Calu3 (cell line): ENCODE measurements at regions of chr7 and their contacts with region 1.

Region 1: GRCh38 chr7:98434095-98434494 is 33.2 kb upstream of the BAIAP2L1 start:
- DNase-seq: no peak
- H3K4me3 Mint-ChIP-seq: no peak overlapping the region
- H3K27ac Mint-ChIP-seq: no peak overlapping the region
- H3K4me1 Mint-ChIP-seq: peaks cover 6% of the 10 kb centered on the region
- H3K27me3 Mint-ChIP-seq: peaks cover 26% of the 10 kb centered on the region
- CTCF ChIP-seq: no peak

Region 2: GRCh38 chr7:98357751-98358161 is 76.3 kb before region 1 on chr7:
- CTCF ChIA-PET with region 1: no interaction called
- intact Hi-C with region 1: no loop called
- DNase-seq: peak; percentile 7
- H3K4me3 Mint-ChIP-seq: peak overlapping the region; percentile 30
- H3K27ac Mint-ChIP-seq: no peak overlapping the region
- H3K4me1 Mint-ChIP-seq: peaks cover 31% of the 10 kb centered on the region
- H3K27me3 Mint-ChIP-seq: no peaks in the 10 kb centered on the region
- CTCF ChIP-seq: no peak

Region 3: DNA sequence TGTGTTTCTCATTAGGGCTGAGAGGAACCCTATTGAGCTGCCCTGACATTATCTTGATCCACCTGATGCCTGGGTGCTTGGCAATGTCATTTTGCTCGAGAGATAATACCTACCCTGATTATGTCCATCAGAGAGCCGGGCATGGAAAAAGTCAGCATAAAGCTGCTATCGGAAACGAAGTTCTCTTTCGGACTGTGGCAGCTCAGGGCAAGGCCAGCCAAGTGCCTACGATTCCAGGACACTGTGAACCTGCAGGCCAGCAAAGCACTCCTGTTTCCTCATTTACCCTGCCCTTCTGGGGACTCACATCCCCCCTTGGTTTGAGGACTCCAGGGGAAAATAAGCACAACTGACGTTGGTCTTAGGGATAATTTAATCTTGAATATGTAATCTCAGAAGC is 157.8 kb after region 1 on chr7:
- CTCF ChIA-PET with region 1: interaction called, 14 read pairs
- intact Hi-C with region 1: no loop called
- DNase-seq: no peak
- H3K4me3 Mint-ChIP-seq: no peak overlapping the region
- H3K27ac Mint-ChIP-seq: no peak overlapping the region
- H3K4me1 Mint-ChIP-seq: no peaks in the 10 kb centered on the region
- H3K27me3 Mint-ChIP-seq: peaks cover 24% of the 10 kb centered on the region
- CTCF ChIP-seq: no peak

Region 4: DNA sequence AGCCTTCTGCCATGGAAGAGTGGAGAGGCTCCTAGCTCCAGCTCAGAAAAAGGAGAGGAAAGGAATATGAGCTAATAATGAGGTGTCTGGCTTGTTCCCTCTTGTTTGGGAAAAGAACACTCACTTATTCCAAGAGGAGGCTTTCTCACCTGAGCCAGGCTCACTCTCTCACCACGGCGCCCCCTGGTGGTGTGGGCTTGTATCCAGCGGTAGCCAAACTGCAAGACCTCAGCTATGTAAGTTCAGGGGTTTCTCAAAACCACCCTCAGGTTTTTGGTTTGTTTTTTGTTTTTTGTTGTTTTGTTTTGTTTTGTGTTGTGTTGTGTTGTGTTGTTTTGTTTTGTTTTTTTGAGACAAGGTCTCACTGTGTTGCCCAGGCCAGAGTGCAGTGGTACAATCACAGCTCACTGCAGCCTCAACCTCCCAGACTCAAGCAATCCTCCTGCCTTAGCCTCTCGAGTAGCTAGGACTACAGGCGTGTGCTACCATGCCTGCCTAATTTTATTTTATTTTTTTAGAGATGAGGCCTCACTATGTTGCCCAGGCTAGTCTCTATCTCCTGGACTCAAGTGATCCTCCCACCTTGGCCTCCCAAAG is 311.7 kb after region 1 on chr7:
- CTCF ChIA-PET with region 1: no interaction called
- intact Hi-C with region 1: loop called (anchors 2 kb)
- DNase-seq: peak; percentile 84
- H3K4me3 Mint-ChIP-seq: no peak overlapping the region
- H3K27ac Mint-ChIP-seq: no peak overlapping the region
- H3K4me1 Mint-ChIP-seq: no peaks in the 10 kb centered on the region
- H3K27me3 Mint-ChIP-seq: peaks cover 16% of the 10 kb centered on the region
- CTCF ChIP-seq: peak; percentile 75

Region 5: GRCh38 chr7:98841179-98841997 is 407.3 kb after region 1 on chr7:
- CTCF ChIA-PET with region 1: no interaction called
- intact Hi-C with region 1: loop called (anchors 1 kb)
- DNase-seq: peak; percentile 72
- H3K4me3 Mint-ChIP-seq: no peak overlapping the region
- H3K27ac Mint-ChIP-seq: no peak overlapping the region
- H3K4me1 Mint-ChIP-seq: no peaks in the 10 kb centered on the region
- H3K27me3 Mint-ChIP-seq: peaks cover 13% of the 10 kb centered on the region
- CTCF ChIP-seq: peak; percentile 85